AG04450 (cell line): ENCODE measurements at regions of chr19 and their contacts with region 1.

Region 1: DNA sequence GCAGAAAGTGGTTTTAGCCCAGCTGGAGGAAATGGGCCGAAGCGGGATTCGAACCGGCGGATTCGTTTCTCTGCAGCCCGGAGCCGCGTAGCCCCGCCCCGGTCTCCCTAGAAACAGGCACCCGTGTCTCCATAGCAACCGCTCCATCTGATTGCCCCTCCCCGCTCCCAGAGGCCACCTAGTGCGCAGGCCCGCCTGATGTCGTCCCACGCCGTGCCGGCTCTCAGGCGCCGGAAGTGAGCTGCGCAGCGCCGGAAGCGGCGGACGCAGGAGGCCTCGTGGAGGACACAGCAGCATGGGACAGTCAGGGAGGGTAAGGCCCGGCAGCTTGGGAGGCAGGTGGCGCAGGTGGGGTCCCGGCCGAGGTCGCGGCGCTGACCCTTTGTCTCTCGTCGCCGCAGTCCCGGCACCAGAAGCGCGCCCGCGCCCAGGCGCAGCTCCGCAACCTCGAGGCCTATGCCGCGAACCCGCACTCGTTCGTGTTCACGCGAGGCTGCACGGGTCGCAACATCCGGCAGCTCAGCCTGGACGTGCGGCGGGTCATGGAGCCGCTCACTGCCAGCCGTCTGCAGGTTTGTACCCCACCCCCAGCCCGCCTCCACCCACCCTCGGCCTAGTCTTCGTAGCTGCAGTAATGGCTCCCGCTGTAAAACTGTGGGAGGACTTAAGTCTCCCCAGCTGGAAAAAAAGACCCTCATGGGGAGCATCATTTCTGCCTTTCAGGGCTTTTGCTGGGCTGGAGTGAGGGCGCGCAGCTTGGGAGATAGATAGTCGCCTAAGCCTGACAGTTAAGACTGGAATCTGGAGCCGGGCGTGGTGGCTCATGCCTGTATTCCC is at the start of gene PPAN:
- DNase-seq: peak; percentile 95
- H3K4me3 ChIP-seq: peak within 1 kb of the TSS; percentile 90
- H3K27ac ChIP-seq: peak within 1 kb of the TSS; percentile 21
- H3K27me3 ChIP-seq: no peaks in the 10 kb centered on the region
- CTCF ChIP-seq: no peak
- polyA plus RNA-seq, gene PPAN: 11.5 and 13.1 TPM in 2 replicates

Region 2: GRCh38 chr19:10095948-10096621 is 10.2 kb before region 1 on chr19:
- CTCF ChIA-PET with region 1: interaction called, 4 read pairs
- POLR2A ChIA-PET with region 1: interaction called, 10 read pairs
- DNase-seq: peak; percentile 56
- H3K4me3 ChIP-seq: peak overlapping the region; percentile 58
- H3K27ac ChIP-seq: peak overlapping the region; percentile 25
- H3K27me3 ChIP-seq: no peaks in the 10 kb centered on the region
- CTCF ChIP-seq: no peak

Region 3: GRCh38 chr19:10120538-10121189 is 14.3 kb after region 1 on chr19:
- CTCF ChIA-PET with region 1: interaction called, 4 read pairs
- POLR2A ChIA-PET with region 1: interaction called, 19 read pairs
- DNase-seq: peak; percentile 50
- H3K4me3 ChIP-seq: no peak overlapping the region
- H3K27ac ChIP-seq: peak overlapping the region; percentile 63
- H3K27me3 ChIP-seq: no peaks in the 10 kb centered on the region
- CTCF ChIP-seq: no peak